Gastrocnemius medialis (tissue), 4 donors: ENCODE measurements at regions of chr9 and their contacts with region 1.

Region 1: DNA sequence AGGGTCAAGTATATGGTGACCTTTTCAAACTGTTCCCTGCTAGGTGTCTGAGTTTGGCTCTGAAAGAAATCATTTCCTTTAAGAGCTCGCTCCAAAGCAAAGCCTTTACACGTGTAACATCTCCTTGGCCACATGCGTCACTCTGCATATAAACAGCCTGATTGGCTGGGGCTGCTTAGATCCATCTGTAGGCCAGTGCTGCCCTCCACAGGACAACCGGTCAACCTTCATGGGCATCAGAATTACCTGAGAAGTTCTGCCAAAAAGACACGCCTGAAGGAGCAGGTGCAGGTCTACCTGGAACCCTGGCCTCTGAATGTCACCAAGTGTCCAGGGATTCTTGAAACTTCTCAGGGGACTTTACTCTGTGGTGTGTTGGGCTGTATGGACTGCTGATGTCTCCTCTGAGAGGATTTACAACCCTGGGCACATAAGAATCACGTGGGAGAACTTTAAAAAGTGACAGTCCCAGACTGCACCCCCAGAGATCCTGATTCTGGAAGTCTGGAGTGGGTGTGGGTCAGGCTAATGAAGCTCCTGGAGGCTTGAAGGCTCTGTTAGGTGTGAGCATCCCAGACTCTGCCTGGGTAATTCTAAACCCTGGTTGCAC is 497.6 kb downstream of the GADD45G start:
- DNase-seq: peak; percentile 81 to 83
- ATAC-seq: peak; percentile 59 to 80
- H3K4me3 ChIP-seq: no peak overlapping the region
- H3K27ac ChIP-seq: no peak overlapping the region
- H3K4me1 ChIP-seq: peaks cover 30 to 32% of the 10 kb centered on the region in 2 donors
- H3K27me3 ChIP-seq: no peaks in the 10 kb centered on the region
- CTCF ChIP-seq: peak; percentile 79 to 89 (median 80)
- POLR2A ChIP-seq: no peak

Region 2: GRCh38 chr9:89318123-89319014 is 784.0 kb before region 1 on chr9 and contains the start of gene SECISBP2:
- in situ Hi-C with region 1: loop called in 1 of 4 experiments (anchors 25 kb)
- intact Hi-C with region 1: loop called (anchors 10 kb)
- DNase-seq: peak; percentile 92 to 95
- ATAC-seq: peak; percentile 90 to 93
- H3K4me3 ChIP-seq: peak within 1 kb of the TSS; percentile 69 to 83 (median 80)
- H3K27ac ChIP-seq: peak within 1 kb of the TSS; percentile 87 to 99 (median 98)
- H3K4me1 ChIP-seq: peaks cover 39 to 40% of the 10 kb centered on the region in 2 donors
- H3K27me3 ChIP-seq: no peaks in the 10 kb centered on the region
- CTCF ChIP-seq: peak; percentile 62 to 73 (median 66)
- POLR2A ChIP-seq: peak; percentile 96 to 97
- total RNA-seq, gene SECISBP2: 40.2 to 70.8 (median 54.9) TPM

Region 3: DNA sequence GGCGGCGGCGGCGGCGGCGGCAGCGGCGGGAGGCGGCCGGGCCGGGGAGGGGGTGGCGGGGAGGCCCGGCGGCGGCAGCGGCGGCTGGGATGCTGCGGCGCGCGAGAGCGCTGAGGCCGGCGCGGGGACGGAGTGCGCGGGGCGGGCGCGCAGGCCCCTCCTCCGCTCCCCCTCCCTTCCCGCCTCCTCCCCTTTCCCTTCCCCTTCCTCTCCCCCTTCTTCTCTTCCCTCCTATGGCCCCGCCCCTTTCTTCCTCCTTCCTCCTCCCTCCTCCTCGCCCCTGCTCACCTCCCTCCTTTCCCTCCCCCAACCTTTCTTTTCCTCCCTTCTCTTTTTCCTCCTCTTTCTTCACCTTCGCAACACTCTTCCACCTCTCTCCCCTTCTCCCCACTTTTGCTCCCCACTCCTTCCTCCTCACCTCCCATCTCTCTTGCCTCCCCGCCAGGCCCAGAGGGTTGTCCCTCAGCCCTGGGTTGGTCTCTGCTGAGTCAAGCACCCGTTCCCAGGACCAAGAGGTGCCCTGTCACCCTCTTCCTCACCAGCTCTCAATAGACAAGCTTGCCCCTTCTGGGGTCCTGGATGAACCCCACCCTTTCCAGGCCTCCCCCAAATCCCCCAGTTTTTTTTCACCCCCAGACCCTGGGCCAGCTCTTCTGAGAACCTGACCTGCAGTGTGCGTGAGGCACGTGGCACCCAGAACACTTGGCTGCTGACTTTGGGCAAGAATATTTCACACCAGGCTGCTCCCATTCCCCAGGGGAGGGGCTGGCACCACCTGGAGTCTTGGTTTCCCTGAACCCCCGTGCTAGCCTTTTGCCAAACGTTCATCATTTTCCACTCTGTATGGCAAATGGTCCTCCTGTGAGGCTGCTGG is 604.2 kb before region 1 on chr9 and contains the start of gene SEMA4D:
- in situ Hi-C with region 1: no loop called
- intact Hi-C with region 1: loop called (anchors 10 kb)
- DNase-seq: peak; percentile 76 to 79
- ATAC-seq: peak; percentile 78 to 84
- H3K4me3 ChIP-seq: peak within 1 kb of the TSS; percentile 66 to 92 (median 78)
- H3K27ac ChIP-seq: peak within 1 kb of the TSS; percentile 85 to 96 (median 90)
- H3K4me1 ChIP-seq: peaks cover 25 to 37% of the 10 kb centered on the region in 2 donors
- H3K27me3 ChIP-seq: no peaks in the 10 kb centered on the region
- CTCF ChIP-seq: no peak
- POLR2A ChIP-seq: peak; percentile 7 to 47
- total RNA-seq, gene SEMA4D: 23.6 to 77.0 (median 41.3) TPM

Region 4: DNA sequence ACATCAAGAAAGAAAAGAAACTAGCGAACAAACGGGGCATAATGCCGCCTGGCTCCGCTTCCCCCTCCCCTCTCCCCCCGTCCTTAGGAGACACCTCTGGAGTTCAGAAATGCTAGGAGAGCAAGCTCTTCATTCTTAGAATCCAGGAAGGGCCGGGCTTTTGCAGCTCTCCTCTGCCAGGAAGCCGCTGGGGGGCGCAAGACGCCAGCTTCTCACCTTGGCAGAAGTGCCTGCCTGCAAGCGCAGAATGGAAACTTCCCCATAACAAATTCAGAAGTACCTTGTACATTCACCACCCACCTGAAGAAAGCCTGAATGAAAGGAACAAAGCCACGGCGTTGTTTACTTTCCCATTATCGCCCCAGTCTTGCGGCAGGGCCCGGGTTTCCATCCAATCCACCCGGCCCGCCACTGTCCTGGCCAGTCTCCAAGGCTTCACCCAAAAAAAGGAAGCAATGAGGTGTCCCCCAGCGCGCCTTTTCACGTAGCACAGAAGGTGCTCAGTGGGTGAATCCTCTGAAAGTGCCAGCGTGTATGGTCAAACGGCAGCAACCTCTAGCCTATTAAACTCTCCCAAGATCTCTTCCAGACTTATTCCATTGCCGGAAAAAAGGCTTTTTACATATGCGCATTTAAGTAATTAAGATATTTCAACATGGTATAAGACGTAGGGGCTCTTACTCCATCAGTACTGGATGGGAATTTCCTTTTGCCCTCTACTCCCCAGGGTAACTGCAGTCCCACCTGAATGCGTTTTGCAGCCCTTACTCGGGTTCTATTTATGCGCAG is 499.2 kb before region 1 on chr9:
- in situ Hi-C with region 1: loop called (anchors 5 kb)
- intact Hi-C with region 1: loop called (anchors 1 kb)
- DNase-seq: peak; percentile 82 to 89
- ATAC-seq: peak; percentile 35 to 45
- H3K4me3 ChIP-seq: peak overlapping the region; percentile 73 to 84 (median 78)
- H3K27ac ChIP-seq: peak overlapping the region; percentile 92 to 94 (median 94)
- H3K4me1 ChIP-seq: peaks cover 11 to 19% of the 10 kb centered on the region in 2 donors
- H3K27me3 ChIP-seq: no peaks in the 10 kb centered on the region
- CTCF ChIP-seq: peak; percentile 86 to 92 (median 89)
- POLR2A ChIP-seq: no peak

Region 5: DNA sequence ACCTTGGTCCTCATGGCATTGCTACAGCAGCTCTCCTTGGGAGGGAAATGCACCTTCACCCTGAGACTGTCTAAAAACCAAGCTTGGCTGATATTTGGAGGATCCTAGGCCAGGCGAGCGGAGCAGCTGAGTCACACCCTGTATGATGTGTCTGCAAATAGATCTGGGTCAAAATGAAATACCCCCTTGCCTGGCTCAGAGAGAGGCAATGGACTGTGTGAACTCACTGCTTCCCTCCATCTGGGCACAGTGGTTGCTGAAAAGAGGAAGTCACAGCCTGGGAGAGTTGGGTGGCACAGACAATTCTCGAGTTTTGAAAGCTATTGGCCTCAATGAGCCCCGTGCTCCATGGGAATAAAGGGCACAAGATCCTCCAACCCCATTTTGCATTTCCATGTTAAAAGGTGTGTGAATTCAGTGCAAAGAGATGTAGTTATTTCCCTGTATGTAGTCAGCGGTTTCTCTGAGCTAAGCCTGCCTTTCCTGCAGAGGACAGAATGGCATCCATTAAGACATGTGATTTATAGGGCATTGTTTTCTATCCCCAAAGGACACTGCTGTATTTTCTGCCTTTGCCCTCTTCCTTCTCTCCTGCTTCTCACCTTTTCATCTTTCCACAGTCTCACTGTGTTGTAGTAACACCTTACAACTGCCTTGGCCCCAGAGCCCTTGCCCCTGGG is 320.4 kb before region 1 on chr9:
- in situ Hi-C with region 1: loop called in 1 of 4 experiments (anchors 25 kb)
- intact Hi-C with region 1: no loop called
- DNase-seq: no peak
- ATAC-seq: peak; percentile 74 to 82
- H3K4me3 ChIP-seq: no peak overlapping the region
- H3K27ac ChIP-seq: no peak overlapping the region
- H3K4me1 ChIP-seq: peaks cover 0 to 6% of the 10 kb centered on the region in 2 donors
- H3K27me3 ChIP-seq: no peaks in the 10 kb centered on the region
- CTCF ChIP-seq: no peak
- POLR2A ChIP-seq: no peak

Region 6: GRCh38 chr9:89919169-89919681 is 183.2 kb before region 1 on chr9:
- in situ Hi-C with region 1: loop called in 1 of 4 experiments (anchors 25 kb)
- intact Hi-C with region 1: loop called (anchors 2 kb)
- DNase-seq: peak; percentile 34 to 65
- ATAC-seq: peak; percentile 86 to 95
- H3K4me3 ChIP-seq: no peak overlapping the region
- H3K27ac ChIP-seq: no peak overlapping the region
- H3K4me1 ChIP-seq: no peaks in the 10 kb centered on the region
- H3K27me3 ChIP-seq: no peaks in the 10 kb centered on the region
- CTCF ChIP-seq: peak in 4 of 5 experiments; percentile 21 to 57 (median 48)
- POLR2A ChIP-seq: no peak

Region 7: DNA sequence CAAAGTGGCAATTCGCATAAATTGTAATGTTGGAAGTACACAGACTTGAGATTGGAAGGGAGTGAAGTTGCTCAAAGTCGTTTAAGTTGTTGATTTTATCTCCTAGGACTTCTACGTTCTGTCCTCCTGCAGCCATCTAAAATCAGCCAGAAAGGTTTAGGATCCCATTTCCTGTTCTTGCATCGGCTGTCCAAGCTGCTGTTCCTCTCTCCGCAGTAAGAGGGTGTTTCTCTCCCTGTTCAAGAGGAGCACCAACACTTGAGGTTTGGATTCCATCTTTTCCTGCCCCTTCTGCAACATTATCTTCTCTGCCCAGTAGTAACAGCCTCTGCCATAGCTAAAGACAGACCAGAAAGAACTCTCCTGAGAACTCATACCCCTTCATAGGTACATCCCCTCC is 124.2 kb before region 1 on chr9:
- in situ Hi-C with region 1: loop called in 1 of 4 experiments (anchors 25 kb)
- intact Hi-C with region 1: loop called (anchors 5 kb)
- DNase-seq: no peak
- ATAC-seq: peak in 1 of 2 donors; percentile 47
- H3K4me3 ChIP-seq: no peak overlapping the region
- H3K27ac ChIP-seq: no peak overlapping the region
- H3K4me1 ChIP-seq: no peaks in the 10 kb centered on the region
- H3K27me3 ChIP-seq: no peaks in the 10 kb centered on the region
- CTCF ChIP-seq: peak in 2 of 5 experiments; percentile 17 to 37
- POLR2A ChIP-seq: no peak

Region 8: DNA sequence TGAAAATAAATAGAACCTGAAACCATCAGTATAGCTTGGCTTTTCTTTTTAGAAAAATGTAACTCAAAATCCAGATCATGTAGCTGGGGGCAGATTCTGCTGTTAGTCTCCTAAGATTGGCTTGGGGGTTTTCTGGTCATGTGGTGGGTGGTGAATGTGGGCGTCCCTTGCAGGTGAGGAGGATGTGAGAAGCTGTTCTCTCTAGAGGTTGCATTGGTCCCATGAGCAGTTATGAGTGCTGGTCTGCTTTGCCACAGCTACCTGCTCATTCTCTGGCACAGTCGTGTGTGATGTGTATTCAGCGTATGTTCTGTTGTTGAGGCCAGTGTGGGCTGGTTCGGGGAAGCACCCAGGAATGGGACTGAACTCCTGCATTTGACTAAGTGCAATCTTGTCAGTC is 73.5 kb after region 1 on chr9:
- in situ Hi-C with region 1: no loop called
- intact Hi-C with region 1: no loop called
- DNase-seq: no peak
- ATAC-seq: no peak
- H3K4me3 ChIP-seq: no peak overlapping the region
- H3K27ac ChIP-seq: no peak overlapping the region
- H3K4me1 ChIP-seq: no peaks in the 10 kb centered on the region
- H3K27me3 ChIP-seq: no peaks in the 10 kb centered on the region
- CTCF ChIP-seq: no peak
- POLR2A ChIP-seq: no peak

Region 9: GRCh38 chr9:90204128-90204831 is 101.9 kb after region 1 on chr9:
- in situ Hi-C with region 1: no loop called
- intact Hi-C with region 1: no loop called
- DNase-seq: no peak
- ATAC-seq: no peak
- H3K4me3 ChIP-seq: no peak overlapping the region
- H3K27ac ChIP-seq: no peak overlapping the region
- H3K4me1 ChIP-seq: no peaks in the 10 kb centered on the region
- H3K27me3 ChIP-seq: peaks cover 0 to 7% (median 0%) of the 10 kb centered on the region in 3 donors
- CTCF ChIP-seq: no peak
- POLR2A ChIP-seq: no peak